GM23248 (cell line): ENCODE measurements at regions of chr10 and their contacts with region 1.

Region 1: DNA sequence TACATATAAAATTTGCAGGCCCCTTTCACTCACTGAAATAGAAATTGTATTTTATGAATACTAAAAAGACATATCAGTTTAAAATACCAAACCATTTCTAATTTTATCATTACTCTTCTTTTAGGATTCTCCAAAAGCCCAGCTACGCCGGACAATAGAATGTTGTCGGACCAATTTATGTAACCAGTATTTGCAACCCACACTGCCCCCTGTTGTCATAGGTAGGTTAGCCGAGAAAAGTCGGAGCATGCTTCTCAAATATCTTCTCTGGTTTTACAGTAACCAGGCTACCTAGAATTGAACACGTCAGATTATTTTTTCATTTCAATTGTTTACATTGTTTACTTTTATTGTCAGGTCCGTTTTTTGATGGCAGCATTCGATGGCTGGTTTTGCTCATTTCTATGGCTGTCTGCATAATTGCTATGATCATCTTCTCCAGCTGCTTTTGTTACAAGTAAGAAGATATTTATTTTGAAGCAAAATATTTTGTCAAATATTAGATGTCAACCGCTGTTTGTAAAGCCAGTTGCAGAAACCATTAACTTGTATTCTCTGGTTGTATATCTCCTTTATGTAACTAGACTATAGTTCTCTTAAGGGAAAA is 57.6 kb downstream of the MMRN2 start:
- DNase-seq: peak; percentile 82
- H3K4me3 ChIP-seq: no peak overlapping the region
- H3K27ac ChIP-seq: no peak overlapping the region
- H3K4me1 ChIP-seq: peaks cover 6% of the 10 kb centered on the region; the same call in 1 of the 2 replicates
- H3K27me3 ChIP-seq: no peaks in the 10 kb centered on the region

Region 2: GRCh38 chr10:86706401-86706841 is 193.4 kb before region 1 on chr10:
- in situ Hi-C with region 1: loop called (anchors 10 kb)
- DNase-seq: no peak
- H3K4me3 ChIP-seq: no peak overlapping the region
- H3K27ac ChIP-seq: no peak overlapping the region
- H3K4me1 ChIP-seq: peaks cover 6% of the 10 kb centered on the region; the same call in 1 of the 2 replicates
- H3K27me3 ChIP-seq: no peaks in the 10 kb centered on the region